ENCODE measurements at regions of chr11 and their contacts with region 1.

Region 1: GRCh38 chr11:8092587-8093424 is 11.8 kb downstream of the TUB start:
- DNase-seq: peak; percentile 68
- ATAC-seq: peak; percentile 88
- H3K4me3 Mint-ChIP-seq: no peak overlapping the region
- H3K27ac Mint-ChIP-seq: no peak overlapping the region
- H3K4me1 Mint-ChIP-seq: no peaks in the 10 kb centered on the region
- H3K27me3 Mint-ChIP-seq: no peaks in the 10 kb centered on the region
- CTCF ChIP-seq: peak; percentile 52

Region 2: DNA sequence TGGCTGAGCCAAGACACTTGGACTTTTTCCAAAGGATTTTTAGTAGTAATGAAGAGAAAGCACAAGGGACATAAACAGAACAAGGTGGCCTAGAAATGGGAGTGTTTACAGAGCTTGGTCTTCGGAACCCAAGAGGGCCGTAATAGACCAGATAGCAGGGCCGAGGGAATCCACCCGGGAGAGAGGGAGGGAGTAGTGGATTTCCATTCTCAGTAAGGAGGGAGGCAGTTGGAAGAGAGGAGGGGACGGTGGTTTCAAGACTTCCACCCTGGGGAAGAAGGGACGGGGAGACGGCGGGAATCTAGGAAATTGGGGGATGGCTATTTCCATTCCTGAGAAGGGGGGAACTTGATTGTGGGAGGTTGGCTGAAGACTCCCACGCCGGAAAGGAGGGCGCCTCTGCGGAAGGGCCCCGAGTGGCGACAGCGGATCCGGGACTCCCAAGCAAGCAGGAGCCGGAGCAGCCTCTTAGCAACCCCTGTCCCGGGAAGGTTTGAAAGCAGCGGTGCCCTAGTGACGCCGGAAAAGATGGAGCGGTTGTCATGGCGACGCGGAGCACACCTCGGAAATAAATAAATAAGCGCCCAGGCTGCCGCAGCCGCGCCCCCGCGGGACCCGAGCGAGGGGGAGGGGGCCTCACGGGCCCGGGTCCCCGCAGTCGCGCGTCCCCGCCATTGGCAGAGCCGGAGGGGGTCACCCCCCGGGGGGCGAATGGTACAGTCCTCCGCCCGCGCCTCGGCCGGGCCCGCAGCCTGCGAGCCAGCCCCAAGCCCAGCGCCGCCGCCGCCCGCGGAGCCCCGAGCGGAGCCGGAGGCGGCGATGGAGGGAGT is 74.1 kb before region 1 on chr11:
- CTCF ChIA-PET with region 1: interaction called, 14 read pairs
- POLR2A ChIA-PET with region 1: no interaction called
- intact Hi-C with region 1: no loop called
- DNase-seq: peak; percentile 76
- ATAC-seq: peak; percentile 78
- H3K4me3 Mint-ChIP-seq: peak overlapping the region; percentile 61
- H3K27ac Mint-ChIP-seq: peak overlapping the region; percentile 20
- H3K4me1 Mint-ChIP-seq: peaks cover 11% of the 10 kb centered on the region
- H3K27me3 Mint-ChIP-seq: peaks cover 32% of the 10 kb centered on the region
- CTCF ChIP-seq: no peak

Measured in activated CD8-positive, alpha-beta T cell treated with anti-CD3 and anti-CD28 coated beads for 36 hours (primary cell).